Posterior vena cava (tissue), 2 donors: ENCODE measurements at regions of chr1 and their contacts with region 1.

Region 1: DNA sequence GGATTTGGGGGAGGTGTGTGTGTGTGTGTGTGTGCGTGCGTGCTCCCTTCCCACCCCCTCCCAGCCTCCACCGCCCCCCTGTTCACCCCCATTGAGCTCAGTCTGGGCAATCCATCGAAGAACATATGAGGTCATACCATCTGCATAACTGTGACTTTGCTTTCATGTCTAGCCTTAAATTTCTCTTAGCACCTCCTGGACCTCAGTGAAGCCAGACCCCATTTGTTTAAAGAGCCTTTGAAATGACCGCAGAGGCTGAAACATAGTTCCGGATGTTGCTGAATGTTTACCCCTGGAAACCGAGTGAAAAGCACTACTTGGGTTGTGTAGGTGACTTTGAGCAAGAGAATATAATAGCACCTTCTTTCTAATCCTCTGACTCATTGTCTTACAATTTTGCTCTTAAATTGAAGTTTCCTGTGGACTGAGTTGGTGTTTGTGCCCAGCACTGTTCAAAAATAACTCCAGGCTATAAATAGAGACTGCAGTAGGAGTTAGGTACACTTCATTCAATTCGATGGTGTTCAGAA is 75.4 kb downstream of the UBE4B start:
- DNase-seq: no peak

Region 2: DNA sequence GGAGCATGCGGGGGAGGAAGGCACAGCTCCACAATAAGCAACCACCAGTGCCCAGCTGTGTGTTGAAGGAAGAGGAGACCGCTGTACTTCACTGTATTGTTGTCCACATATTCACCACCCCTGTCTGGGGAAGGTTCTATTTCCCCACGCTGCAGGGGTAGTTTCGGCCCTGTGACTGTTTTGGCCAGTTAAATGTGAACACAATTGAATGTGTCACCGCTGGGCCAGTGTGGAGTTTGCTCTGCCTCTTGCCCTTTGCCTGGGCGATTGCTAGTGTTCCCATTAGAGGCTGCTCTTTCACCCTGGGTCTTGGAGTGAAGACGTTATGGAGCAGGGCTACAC is 42.9 kb before region 1 on chr1:
- intact Hi-C with region 1: loop called in 1 of 2 experiments (anchors 5 kb)
- DNase-seq: no peak